Left ventricle myocardium inferior (tissue), 1 donor: ENCODE measurements at regions of chr12 and their contacts with region 1.

Region 1: GRCh38 chr12:32918890-32919801 is 22.6 kb upstream of the PKP2 start:
- DNase-seq: no peak
- H3K4me3 ChIP-seq: no peak overlapping the region
- H3K27ac ChIP-seq: no peak overlapping the region
- H3K4me1 ChIP-seq: no peaks in the 10 kb centered on the region
- H3K27me3 ChIP-seq: no peaks in the 10 kb centered on the region
- CTCF ChIP-seq: peak; percentile 65

Region 2: DNA sequence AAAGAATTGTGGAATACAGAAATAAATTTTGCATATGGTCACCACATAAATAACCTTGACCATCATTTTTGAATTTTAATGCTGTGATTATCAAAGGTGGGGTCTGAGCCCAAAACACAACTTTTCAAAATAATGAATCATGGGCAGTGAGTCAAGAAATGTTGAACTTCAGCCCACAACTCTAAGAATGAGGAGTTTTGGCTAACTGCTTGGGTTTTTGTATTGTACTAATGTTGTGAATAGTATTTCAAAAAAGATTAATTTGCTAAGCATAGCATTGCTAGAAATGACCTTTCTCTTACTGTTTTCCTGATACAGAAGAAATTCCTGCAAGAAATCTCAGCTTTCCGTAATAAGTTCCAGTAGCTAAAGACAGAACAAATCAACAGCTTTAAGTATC is 139.1 kb before region 1 on chr12:
- intact Hi-C with region 1: loop called (anchors 10 kb)
- DNase-seq: no peak
- H3K4me3 ChIP-seq: no peak overlapping the region
- H3K27ac ChIP-seq: no peak overlapping the region
- H3K4me1 ChIP-seq: no peaks in the 10 kb centered on the region
- H3K27me3 ChIP-seq: no peaks in the 10 kb centered on the region
- CTCF ChIP-seq: no peak